T-cell (primary cell): ENCODE measurements at regions of chr3 and their contacts with region 1.

Region 1: GRCh38 chr3:31754575-31755278 is 222.0 kb downstream of the STT3B start:
- DNase-seq: no peak
- ATAC-seq: no peak
- H3K4me3 ChIP-seq: no peak overlapping the region
- H3K4me3 Mint-ChIP-seq: no peak overlapping the region
- H3K27ac ChIP-seq: no peak overlapping the region
- H3K27ac Mint-ChIP-seq: no peak overlapping the region
- H3K4me1 ChIP-seq: no peaks in the 10 kb centered on the region
- H3K4me1 Mint-ChIP-seq: peaks cover 16 to 23% (median 20%) of the 10 kb centered on the region in 3 donors
- H3K27me3 ChIP-seq: no peaks in the 10 kb centered on the region
- H3K27me3 Mint-ChIP-seq: no peaks in the 10 kb centered on the region

Region 2: DNA sequence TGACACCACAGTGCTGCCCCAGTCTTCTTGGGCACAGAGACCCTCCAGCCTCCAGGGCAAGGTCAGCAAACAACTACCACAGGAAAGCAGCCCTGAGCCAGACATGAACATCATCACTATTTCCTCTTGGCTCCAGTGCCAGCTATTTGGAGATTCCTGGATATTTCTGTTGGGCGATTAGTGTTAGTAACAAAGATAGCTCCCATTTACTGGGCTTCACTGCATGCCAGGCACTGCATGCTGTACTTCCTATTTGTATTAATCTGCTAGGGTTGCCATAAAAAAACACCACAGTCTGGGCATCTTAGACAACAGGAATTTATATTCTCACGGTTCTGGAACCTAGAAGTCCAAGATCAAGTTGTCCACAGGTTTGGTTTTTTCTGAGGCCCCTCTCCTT is 477.1 kb before region 1 on chr3:
- CTCF ChIA-PET with region 1: no interaction called
- POLR2A ChIA-PET with region 1: no interaction called
- DNase-seq: no peak
- ATAC-seq: no peak
- H3K4me3 ChIP-seq: no peak overlapping the region
- H3K4me3 Mint-ChIP-seq: no peak overlapping the region
- H3K27ac ChIP-seq: no peak overlapping the region
- H3K27ac Mint-ChIP-seq: no peak overlapping the region
- H3K4me1 ChIP-seq: peaks cover 0 to 4% of the 10 kb centered on the region in 2 experiments
- H3K4me1 Mint-ChIP-seq: peaks cover 12 to 20% (median 13%) of the 10 kb centered on the region in 3 donors
- H3K27me3 ChIP-seq: no peaks in the 10 kb centered on the region
- H3K27me3 Mint-ChIP-seq: no peaks in the 10 kb centered on the region

Region 3: DNA sequence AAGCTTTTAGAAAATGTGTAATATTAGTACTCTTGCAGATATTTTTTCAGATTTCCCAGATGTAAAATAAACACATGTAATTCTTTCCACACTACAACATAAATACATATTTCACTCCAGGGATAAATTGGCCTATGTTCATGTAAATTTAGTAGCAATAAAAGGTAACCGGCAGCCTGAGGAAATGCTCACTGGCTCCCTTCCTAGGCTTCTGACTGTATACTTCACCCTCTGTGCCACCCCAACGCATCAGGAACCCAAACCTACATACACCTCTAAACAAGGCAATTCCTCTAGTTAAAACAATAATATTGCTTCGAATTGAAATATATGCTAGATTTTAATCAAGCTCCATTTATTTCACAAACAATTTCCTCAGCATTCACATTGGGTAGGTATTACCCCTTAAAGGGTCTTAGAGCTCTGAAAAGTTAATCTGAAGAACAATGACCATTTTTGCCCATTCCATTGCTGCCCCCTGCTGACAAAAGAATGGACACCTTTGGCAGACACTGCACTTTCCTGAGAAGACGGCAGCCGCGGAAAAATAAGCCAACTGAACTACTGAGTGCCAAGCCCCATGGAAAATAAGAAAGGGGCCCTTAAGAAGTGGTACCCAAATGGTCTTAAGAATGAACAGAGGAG is 13.9 kb after region 1 on chr3:
- CTCF ChIA-PET with region 1: interaction called in 1 of 2 experiments, 10 read pairs
- POLR2A ChIA-PET with region 1: no interaction called
- DNase-seq: peak in 30 of 35 experiments; percentile 7 to 68 (median 28)
- ATAC-seq: peak in 1 of 4 experiments; percentile 27
- H3K4me3 ChIP-seq: no peak overlapping the region
- H3K4me3 Mint-ChIP-seq: no peak overlapping the region
- H3K27ac ChIP-seq: no peak overlapping the region
- H3K27ac Mint-ChIP-seq: no peak overlapping the region
- H3K4me1 ChIP-seq: no peaks in the 10 kb centered on the region
- H3K4me1 Mint-ChIP-seq: peaks cover 2 to 5% (median 2%) of the 10 kb centered on the region in 3 donors
- H3K27me3 ChIP-seq: no peaks in the 10 kb centered on the region
- H3K27me3 Mint-ChIP-seq: peaks cover 0 to 2% of the 10 kb centered on the region in 2 donors